Vagina (tissue), 2 donors: ENCODE measurements at regions of chr6 and their contacts with region 1.

Region 1: GRCh38 chr6:144284783-144285547 is at the start of gene UTRN:
- DNase-seq: peak in 1 of 2 donors; percentile 91
- H3K4me3 ChIP-seq: peak within 1 kb of the TSS; percentile 68 to 75
- H3K27ac ChIP-seq: peak within 1 kb of the TSS; percentile 96
- H3K4me1 ChIP-seq: peaks cover 18% of the 10 kb centered on the region
- H3K27me3 ChIP-seq: no peaks in the 10 kb centered on the region
- CTCF ChIP-seq: no peak
- POLR2A ChIP-seq: peak in 1 of 2 donors; percentile 51
- total RNA-seq, gene UTRN: 160 TPM

Region 2: GRCh38 chr6:144327081-144327480 is 42.1 kb after region 1 on chr6:
- intact Hi-C with region 1: loop called (anchors 2 kb)
- DNase-seq: no peak
- H3K4me3 ChIP-seq: peak overlapping the region in 1 of 2 donors; percentile 24
- H3K27ac ChIP-seq: peak overlapping the region; percentile 69
- H3K4me1 ChIP-seq: peaks cover 46% of the 10 kb centered on the region
- H3K27me3 ChIP-seq: no peaks in the 10 kb centered on the region
- CTCF ChIP-seq: no peak
- POLR2A ChIP-seq: no peak

Region 3: GRCh38 chr6:144482142-144482541 is 197.2 kb after region 1 on chr6:
- intact Hi-C with region 1: loop called (anchors 10 kb)
- DNase-seq: no peak
- H3K4me3 ChIP-seq: no peak overlapping the region
- H3K27ac ChIP-seq: no peak overlapping the region
- H3K4me1 ChIP-seq: no peaks in the 10 kb centered on the region
- H3K27me3 ChIP-seq: no peaks in the 10 kb centered on the region
- CTCF ChIP-seq: peak; percentile 13 to 66 (median 60)
- POLR2A ChIP-seq: no peak